ENCODE measurements at regions of chr20 and their contacts with region 1.

Region 1: DNA sequence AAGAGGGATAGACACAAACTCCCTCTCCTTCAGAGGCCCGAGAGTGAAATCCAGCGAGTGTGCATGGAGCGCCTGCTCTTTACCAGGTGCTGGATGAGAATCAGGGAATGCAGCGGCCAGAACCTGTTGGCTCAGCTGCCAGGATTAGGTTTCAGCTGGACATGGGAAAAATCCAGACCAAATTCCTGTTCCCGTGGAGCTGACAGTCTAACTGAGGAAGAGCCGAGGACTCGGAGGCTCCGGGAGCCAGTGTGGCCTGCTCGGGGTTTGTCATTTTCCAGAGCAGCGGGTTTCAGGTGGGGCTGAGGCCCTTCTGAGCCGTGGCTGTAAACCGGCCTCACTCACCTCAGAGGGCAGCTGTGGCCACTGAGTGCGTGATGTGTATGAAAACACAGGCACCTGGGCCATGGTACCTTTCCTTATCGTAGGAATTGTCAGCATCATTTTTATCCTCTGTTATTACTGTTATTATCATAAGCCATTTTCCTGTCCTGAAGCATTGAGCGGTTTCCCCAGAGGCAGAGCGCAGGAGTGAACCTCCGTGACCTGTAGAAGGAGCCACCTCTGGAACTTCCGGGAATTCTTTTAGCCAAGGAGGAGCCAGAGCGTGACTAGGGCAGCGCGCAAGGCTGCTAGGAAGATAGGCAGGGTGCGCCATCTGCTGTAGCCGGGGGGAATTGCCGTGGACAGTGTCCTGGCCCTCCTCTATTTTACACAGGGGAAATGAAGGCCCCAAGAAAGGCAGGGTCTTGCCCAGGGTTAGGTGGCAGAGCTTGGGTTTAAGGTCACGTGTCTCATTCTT is 27.3 kb downstream of the PKIG start:
- DNase-seq: peak; percentile 88 to 93
- ATAC-seq: peak; percentile 88

Region 2: DNA sequence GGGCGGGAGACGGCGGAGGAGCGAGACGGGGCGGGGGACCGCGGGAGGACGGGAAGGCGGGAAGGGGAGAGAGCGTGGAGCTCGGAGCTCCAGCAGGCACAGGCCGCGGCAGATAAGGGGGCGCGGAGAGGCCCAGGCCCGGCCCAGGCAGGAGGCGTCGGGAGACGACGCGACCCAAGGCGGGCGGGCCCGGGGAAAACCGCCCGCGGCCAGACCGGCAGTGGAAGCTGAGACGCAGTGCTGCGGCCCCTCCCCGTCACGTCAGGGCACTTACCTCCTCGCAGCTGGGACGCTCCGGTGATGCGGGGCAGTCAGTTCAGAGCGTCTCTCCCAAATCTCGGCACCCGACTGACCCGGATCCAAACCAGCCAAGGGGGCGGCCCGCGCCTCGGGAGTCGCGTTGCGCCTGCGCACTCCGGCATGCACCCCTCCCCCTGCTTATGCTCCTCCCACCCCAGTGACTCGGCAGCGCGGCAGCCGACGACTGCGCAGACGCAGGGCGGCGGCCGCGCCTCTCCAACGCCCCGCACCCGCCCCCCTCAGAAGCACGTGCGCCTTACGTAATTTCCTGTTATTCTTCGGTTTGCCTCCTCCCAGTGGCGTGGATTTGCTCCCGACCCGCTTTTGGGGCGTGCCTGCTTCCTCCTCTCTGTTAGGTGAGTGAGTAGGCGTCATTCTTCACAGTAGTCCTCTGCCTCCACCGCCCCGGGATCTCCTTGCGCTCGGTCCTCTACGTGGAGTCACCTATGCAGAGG is 399.1 kb before region 1 on chr20 and contains the start of gene OSER1:
- intact Hi-C with region 1: loop called in 1 of 2 experiments (anchors 10 kb)
- DNase-seq: peak; percentile 97 to 99
- ATAC-seq: peak; percentile 81
- total RNA-seq, gene OSER1: 21.9 to 35.2 TPM

Region 3: GRCh38 chr20:44310664-44311639 is 298.8 kb before region 1 on chr20 and contains the start of gene FITM2:
- intact Hi-C with region 1: loop called in 1 of 2 experiments (anchors 5 kb)
- DNase-seq: peak; percentile 98 to 99
- ATAC-seq: peak; percentile 92
- total RNA-seq, gene FITM2: 9.5 to 10.2 TPM

Region 4: DNA sequence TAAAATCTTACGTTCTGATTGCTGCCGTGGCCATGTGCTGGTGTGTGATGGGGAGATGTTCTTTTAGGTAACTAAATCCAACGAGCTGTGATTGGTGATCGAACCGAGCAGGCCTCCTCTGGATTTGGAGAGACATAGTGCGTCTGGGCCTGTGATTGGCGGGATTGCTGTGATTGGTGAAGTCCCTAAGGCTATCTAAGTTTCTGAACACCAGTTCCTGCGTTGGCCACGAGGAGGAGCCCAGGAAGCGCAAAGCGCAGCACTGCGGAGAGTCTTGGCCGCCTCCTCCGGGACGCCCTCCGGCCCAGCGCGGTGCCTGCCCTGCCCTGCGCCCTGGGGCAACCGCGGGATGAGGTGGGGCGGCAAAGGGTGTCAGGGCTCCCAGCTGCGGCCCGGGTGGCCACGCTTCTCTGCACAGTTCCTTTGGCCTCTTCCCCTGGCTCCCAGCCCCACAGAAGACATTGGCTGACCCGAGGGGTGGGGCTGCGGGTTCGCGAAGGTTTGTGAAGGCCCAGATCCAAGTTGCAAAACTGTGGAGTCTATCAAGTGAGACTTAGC is 221.2 kb before region 1 on chr20:
- intact Hi-C with region 1: loop called in 1 of 2 experiments (anchors 10 kb)
- DNase-seq: peak; percentile 76 to 87
- ATAC-seq: peak; percentile 65

Region 5: DNA sequence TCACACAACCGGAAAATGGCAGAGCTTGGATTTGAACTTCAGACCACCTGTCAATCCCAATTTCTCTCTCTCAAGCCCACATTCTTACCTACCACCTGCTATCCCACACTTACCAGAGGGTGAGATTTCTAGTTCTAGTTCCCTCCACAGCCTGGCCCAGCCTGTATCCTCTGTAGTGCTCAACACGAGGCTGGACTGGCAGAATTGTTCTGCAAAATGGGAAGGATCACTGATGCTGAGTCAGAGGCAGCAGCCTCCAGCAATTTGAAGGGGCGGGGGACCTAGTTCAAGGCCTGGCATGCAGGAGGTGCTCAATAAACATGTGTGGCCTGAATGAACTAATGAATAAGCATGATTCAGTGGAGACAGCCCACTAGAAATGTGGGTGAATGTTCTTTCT is 187.6 kb before region 1 on chr20:
- intact Hi-C with region 1: no loop called
- DNase-seq: no peak
- ATAC-seq: peak; percentile 58

Region 6: GRCh38 chr20:44532259-44532980 is 77.3 kb before region 1 on chr20:
- intact Hi-C with region 1: loop called (anchors 2 to 10 kb)
- DNase-seq: no peak
- ATAC-seq: no peak